ENCODE measurements at regions of chr6 and their contacts with region 1.

Region 1: DNA sequence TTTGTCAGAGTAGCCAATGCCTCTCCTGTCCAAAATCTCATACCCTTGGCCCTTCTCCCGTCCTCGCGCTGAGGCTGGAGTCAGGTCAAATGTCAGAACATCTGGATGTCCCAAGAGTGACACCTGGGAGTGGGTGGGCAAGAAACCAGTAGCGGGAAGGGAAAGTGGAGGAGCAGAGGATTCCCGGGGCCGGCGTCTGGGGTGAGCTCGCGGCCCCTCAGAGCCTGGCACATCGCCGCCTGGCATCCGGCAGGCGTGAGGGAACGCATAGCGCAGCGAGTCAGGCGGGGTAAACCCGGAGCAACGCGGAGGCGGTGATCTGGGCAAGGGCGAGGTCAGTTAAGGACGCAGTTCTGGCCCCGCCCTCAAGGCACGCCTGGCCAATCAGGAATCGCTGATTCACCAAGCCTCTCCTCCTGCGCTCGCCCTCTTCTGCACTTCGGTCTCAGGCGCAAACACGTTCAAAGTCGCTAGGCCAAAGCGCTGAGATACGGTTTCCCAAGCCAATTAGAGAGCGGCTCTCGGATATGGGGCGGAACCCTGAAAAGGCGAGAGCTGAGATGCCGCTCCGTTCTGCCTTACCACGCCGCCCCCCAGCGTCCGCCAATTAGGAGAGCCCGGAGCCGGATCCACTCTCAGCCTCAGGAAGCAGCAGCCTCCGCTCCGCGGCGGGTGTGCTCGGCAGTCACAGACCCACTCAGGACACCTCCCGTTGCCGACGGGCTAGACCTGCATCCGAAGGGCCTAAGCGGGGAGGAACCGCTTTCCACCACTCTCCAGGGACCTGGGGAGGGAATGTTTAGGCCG is 22.5 kb downstream of the VPS52 start:
- DNase-seq: peak; percentile 95 to 97
- H3K4me3 ChIP-seq: peak overlapping the region; percentile 33 to 73 (median 70)
- H3K27ac ChIP-seq: peak overlapping the region; percentile 44; the same call in 1 of the 2 replicates
- H3K4me1 ChIP-seq: peaks cover 0 to 10% (median 7%) of the 10 kb centered on the region in 4 experiments; a peak in 4 of 7 replicates
- H3K27me3 ChIP-seq: peaks cover 0 to 21% (median 11%) of the 10 kb centered on the region in 4 experiments; a peak in 6 of 7 replicates
- CTCF ChIP-seq: no peak
- EP300 ChIP-seq: no peak
- POLR2A ChIP-seq: peak in 1 of 2 experiments; percentile 70; a peak in 2 of 3 replicates
- RAD21 ChIP-seq: peak; percentile 6 to 22; a peak in 1 of 4 replicates

Region 2: DNA sequence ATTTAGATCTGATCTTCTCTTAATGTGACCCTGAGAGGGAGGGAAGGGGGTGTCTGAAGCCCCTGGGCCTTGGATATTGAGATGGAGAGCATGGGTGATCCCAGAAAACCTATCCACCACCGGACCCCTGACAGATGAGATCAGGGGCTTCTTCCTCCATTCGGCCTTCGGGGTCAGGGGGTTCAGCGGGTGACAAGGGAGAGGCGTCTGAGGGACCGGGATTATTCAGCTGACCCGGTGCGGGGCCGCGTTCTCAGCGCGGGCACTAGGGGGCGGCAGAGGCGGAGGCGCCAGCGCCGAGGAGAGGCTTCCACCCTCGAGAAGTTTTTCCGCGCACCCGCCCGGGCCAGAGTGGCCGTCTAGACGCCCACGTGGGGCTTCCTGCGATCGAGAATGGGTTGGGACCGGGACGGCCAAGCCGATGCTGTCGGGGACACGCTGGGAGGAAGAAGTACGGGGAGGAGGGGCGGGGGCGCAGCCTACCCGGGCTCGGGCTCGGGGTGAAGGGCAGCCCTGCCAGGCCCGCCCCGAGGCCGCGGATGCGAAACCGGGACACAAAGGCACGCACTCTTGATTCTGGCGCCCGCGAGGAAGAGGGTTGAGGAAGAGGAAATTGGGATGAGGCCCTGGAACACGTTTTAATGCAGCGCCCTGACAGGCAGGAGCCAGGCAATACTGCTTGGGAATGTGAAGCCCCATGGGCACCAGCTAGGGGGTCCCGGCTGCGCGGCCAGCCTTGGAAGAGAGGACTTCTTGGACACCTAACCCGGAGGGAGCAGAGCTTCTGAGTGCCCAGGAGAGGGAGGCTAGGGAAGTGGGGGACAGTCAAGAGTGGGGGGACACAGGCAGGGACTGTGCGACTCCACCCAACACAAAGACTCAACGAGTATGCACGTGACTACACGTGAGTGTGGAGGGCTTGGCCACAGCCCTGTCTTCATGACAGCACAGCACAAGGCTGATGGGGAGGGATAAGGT is 87.5 kb before region 1 on chr6:
- CTCF ChIA-PET with region 1: interaction called, 57 read pairs
- POLR2A ChIA-PET with region 1: no interaction called
- DNase-seq: peak in 1 of 2 experiments; percentile 97
- H3K4me3 ChIP-seq: peak overlapping the region; percentile 42 to 74 (median 62)
- H3K27ac ChIP-seq: no peak overlapping the region
- H3K4me1 ChIP-seq: peaks cover 0 to 6% (median 2%) of the 10 kb centered on the region in 4 experiments; a peak in 6 of 7 replicates
- H3K27me3 ChIP-seq: peaks cover 0 to 8% (median 2%) of the 10 kb centered on the region in 4 experiments; a peak in 4 of 7 replicates
- CTCF ChIP-seq: peak in 2 of 3 experiments; percentile 82 to 88; a peak in 3 of 4 replicates
- EP300 ChIP-seq: no peak
- POLR2A ChIP-seq: no peak
- RAD21 ChIP-seq: peak; percentile 48 to 63; a peak in 3 of 4 replicates

Region 3: DNA sequence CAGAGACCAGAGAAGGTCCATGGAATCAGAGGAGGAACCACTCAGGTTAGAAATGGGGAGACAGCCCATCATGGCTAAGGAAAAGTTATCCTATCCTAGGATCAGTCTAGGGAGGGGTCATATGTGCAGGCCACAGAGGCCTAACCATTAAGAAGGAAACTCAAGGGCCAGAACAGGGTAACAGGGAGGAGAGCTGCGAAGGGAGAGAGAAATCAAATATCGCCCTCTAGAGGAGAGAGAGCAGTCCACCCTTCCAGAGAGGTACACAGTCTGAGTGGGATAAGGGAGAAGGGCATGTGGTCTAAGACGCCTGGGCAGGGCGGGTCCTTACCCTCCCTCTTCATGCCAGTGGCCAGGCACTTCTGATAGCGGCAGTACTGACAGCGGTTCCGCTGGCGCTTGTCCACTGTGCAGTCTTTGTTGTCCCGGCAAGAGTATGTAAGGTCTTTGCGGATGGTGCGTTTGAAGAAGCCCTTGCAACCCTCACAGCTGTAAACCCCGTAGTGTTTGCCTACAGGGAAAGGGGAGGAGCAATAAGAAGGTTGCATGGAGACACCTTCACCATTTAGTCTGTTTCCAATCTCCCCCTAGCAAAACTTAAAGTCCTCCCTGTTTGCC is 51.6 kb before region 1 on chr6:
- CTCF ChIA-PET with region 1: interaction called, 26 read pairs
- POLR2A ChIA-PET with region 1: interaction called, 5 read pairs
- DNase-seq: peak in 1 of 2 experiments; percentile 70
- H3K4me3 ChIP-seq: no peak overlapping the region
- H3K27ac ChIP-seq: no peak overlapping the region
- H3K4me1 ChIP-seq: peaks cover 5 to 18% (median 9%) of the 10 kb centered on the region in 4 experiments
- H3K27me3 ChIP-seq: peaks cover 0 to 4% (median 0%) of the 10 kb centered on the region in 4 experiments; a peak in 3 of 7 replicates
- CTCF ChIP-seq: peak in 2 of 3 experiments; percentile 77 to 91; a peak in 3 of 4 replicates
- EP300 ChIP-seq: no peak
- POLR2A ChIP-seq: no peak
- RAD21 ChIP-seq: peak; percentile 67 to 73

Region 4: DNA sequence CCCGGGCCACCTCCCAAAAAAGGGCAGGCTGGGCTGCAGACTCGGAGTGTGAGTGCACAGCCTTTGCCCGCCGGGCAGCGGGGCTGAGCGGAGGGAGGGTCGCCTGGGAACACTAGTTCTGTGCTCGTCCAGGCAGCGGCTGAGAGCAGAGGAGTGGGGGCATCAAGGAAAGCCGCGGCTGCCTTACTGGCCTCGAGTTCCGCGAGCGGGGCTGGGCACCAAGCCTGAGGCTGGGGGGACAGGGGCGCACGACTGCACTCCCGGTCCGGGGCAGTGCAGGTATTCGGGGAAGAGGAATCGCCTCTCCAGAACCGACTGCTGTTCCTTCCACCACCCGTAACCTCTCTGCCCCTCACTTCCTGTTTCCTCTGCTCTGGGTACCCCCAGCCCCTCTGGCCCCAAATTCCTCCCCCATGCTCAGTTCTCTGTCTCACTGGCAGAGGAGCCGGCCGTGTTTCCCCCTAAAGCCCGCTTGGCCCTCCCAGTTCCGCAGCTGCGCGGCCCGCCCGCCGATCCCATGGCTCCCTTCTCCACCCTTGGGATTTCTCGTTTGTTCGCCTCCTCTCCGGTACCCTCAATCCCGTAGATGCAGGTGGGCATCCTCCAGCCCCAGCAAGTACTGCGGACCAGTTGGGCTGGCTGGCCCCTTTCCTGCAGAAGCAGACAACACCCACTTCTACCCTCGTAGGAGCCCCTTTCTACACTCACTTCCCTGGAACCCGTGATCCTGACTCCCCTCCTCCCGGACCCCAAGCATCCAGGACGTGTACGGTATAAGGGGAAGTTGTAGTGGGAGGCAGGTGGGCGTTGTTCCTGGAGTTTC is 35.8 kb before region 1 on chr6:
- CTCF ChIA-PET with region 1: interaction called, 60 read pairs
- POLR2A ChIA-PET with region 1: interaction called, 15 read pairs
- DNase-seq: peak in 1 of 2 experiments; percentile 79
- H3K4me3 ChIP-seq: peak overlapping the region; percentile 50 to 72 (median 66)
- H3K27ac ChIP-seq: no peak overlapping the region
- H3K4me1 ChIP-seq: peaks cover 0 to 13% (median 4%) of the 10 kb centered on the region in 4 experiments; a peak in 6 of 7 replicates
- H3K27me3 ChIP-seq: peaks cover 32 to 71% (median 67%) of the 10 kb centered on the region in 4 experiments
- CTCF ChIP-seq: no peak
- EP300 ChIP-seq: no peak
- POLR2A ChIP-seq: peak in 1 of 2 experiments; percentile 62; a peak in 1 of 3 replicates
- RAD21 ChIP-seq: no peak

Region 5: DNA sequence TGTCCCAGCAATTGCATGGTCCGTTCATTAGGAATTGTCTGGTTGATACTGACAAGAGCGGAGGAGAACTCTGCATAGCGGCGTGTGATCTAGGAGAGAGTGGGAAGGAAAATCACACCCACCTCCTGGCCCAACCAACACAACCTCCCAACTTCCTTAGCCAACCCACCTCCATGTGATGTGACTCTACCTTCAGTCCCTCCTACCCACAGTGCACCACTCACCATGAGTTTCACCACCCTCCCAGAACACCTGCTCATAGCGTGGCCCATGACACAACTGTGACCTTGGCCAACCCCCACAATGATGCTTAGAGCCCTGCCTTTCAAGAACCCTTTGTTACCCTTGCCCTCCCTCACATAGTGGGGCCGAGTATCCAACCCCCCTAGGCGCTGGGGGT is 14.9 kb after region 1 on chr6:
- CTCF ChIA-PET with region 1: interaction called, 14 read pairs
- POLR2A ChIA-PET with region 1: interaction called, 26 read pairs
- DNase-seq: no peak
- H3K4me3 ChIP-seq: no peak overlapping the region
- H3K27ac ChIP-seq: no peak overlapping the region
- H3K4me1 ChIP-seq: no peaks in the 10 kb centered on the region
- H3K27me3 ChIP-seq: no peaks in the 10 kb centered on the region
- CTCF ChIP-seq: no peak
- EP300 ChIP-seq: no peak
- POLR2A ChIP-seq: no peak
- RAD21 ChIP-seq: no peak

Region 6: GRCh38 chr6:33276864-33277662 is 27.9 kb after region 1 on chr6 and contains the start of gene B3GALT4:
- CTCF ChIA-PET with region 1: interaction called, 8 read pairs
- POLR2A ChIA-PET with region 1: interaction called, 25 read pairs
- DNase-seq: peak; percentile 86 to 89
- H3K4me3 ChIP-seq: peak within 1 kb of the TSS; percentile 52 to 81 (median 59)
- H3K27ac ChIP-seq: peak within 1 kb of the TSS; percentile 55; the same call in 1 of the 2 replicates
- H3K4me1 ChIP-seq: peaks cover 3 to 35% (median 12%) of the 10 kb centered on the region in 4 experiments
- H3K27me3 ChIP-seq: no peaks in the 10 kb centered on the region
- CTCF ChIP-seq: peak in 2 of 3 experiments; percentile 40 to 62; a peak in 2 of 4 replicates
- EP300 ChIP-seq: 0 out of 3 replicates have a peak, but pooled peaks of 1 of the 2 experiments have one; percentile 23
- POLR2A ChIP-seq: peak in 1 of 2 experiments; percentile 93; a peak in 2 of 3 replicates
- RAD21 ChIP-seq: 0 out of 4 replicates have a peak, but pooled peaks of 1 of the 2 experiments have one; percentile 19
- total RNA-seq, gene B3GALT4: 3.0 and 4.2 TPM in 2 replicates